ENCODE measurements at regions of chr15 and their contacts with region 1.

Region 1: DNA sequence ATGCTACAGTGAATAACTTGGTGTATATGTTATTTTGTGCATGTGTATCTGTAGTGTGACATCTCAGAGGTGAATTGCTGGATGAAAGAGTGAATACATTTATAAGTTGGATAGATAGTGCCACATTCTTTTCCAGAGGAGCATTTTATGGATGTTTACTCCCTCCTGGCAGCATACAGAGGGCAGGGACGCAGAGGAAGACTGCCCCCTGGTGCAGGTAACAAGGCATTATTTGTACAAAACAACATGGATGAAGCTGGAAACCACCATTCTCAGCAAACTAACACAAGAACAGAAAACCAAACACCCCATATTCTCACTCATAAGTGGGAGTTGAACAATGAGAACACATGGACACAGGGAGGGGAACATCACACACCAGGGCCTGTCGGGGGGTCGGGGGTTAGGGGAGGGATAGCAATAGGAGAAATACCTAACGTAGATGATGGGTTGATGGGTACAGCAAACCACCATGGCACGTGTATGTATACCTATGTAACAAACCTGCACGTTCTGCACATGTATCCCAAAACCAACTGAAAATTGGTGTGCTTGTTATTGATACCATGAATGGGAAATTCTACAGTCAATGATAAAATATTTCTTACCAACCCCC is 57.9 kb upstream of the CTXND1 start:
- H3K4me3 ChIP-seq: no peak overlapping the region
- H3K27ac ChIP-seq: no peak overlapping the region
- H3K4me1 ChIP-seq: no peaks in the 10 kb centered on the region
- CTCF ChIP-seq: peak; percentile 54; the same call in 1 of the 2 replicates

Region 2: GRCh38 chr15:80090879-80091503 is 218.9 kb before region 1 on chr15:
- CTCF ChIA-PET with region 1: no interaction called
- POLR2A ChIA-PET with region 1: no interaction called
- H3K4me3 ChIP-seq: no peak overlapping the region
- H3K27ac ChIP-seq: no peak overlapping the region
- H3K4me1 ChIP-seq: peaks cover 27% of the 10 kb centered on the region
- CTCF ChIP-seq: no peak

Region 3: GRCh38 chr15:80242132-80242769 is 67.6 kb before region 1 on chr15:
- CTCF ChIA-PET with region 1: interaction called, 14 read pairs
- POLR2A ChIA-PET with region 1: no interaction called
- H3K4me3 ChIP-seq: no peak overlapping the region
- H3K27ac ChIP-seq: no peak overlapping the region
- H3K4me1 ChIP-seq: no peaks in the 10 kb centered on the region
- CTCF ChIP-seq: 0 out of 2 replicates have a peak, but pooled peaks have one; percentile 41

Region 4: GRCh38 chr15:80321853-80322252 is 12.0 kb after region 1 on chr15:
- CTCF ChIA-PET with region 1: interaction called, 17 read pairs
- POLR2A ChIA-PET with region 1: no interaction called
- H3K4me3 ChIP-seq: no peak overlapping the region
- H3K27ac ChIP-seq: no peak overlapping the region
- H3K4me1 ChIP-seq: no peaks in the 10 kb centered on the region
- CTCF ChIP-seq: no peak

Region 5: GRCh38 chr15:80384432-80384831 is 74.6 kb after region 1 on chr15:
- CTCF ChIA-PET with region 1: no interaction called
- POLR2A ChIA-PET with region 1: no interaction called
- H3K4me3 ChIP-seq: no peak overlapping the region
- H3K27ac ChIP-seq: no peak overlapping the region
- H3K4me1 ChIP-seq: no peaks in the 10 kb centered on the region
- CTCF ChIP-seq: no peak

Region 6: DNA sequence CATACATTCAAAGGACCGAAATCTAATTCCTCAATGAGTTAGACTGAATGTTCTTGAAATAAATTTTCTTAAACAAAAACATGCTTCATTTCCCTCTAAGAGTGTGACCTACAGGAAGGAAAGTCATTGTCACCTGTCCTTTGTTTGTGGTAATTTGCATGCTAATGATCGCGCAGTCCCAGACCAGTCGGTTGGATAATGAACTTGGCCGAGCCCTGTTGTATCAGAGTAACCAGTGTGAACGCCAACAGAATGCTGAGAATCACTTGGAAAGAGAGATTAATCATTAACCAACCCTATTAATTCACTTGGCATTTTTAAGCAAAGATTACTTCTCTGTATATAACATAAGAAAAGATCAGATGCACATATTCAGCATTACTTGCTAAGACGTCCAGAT is 86.2 kb after region 1 on chr15:
- CTCF ChIA-PET with region 1: no interaction called
- POLR2A ChIA-PET with region 1: no interaction called
- H3K4me3 ChIP-seq: no peak overlapping the region
- H3K27ac ChIP-seq: no peak overlapping the region
- H3K4me1 ChIP-seq: no peaks in the 10 kb centered on the region
- CTCF ChIP-seq: no peak

Region 7: GRCh38 chr15:80436511-80437307 is 126.8 kb after region 1 on chr15:
- CTCF ChIA-PET with region 1: no interaction called
- POLR2A ChIA-PET with region 1: no interaction called
- H3K4me3 ChIP-seq: no peak overlapping the region
- H3K27ac ChIP-seq: no peak overlapping the region
- H3K4me1 ChIP-seq: no peaks in the 10 kb centered on the region
- CTCF ChIP-seq: no peak

Measured in HEK293 (cell line).